CD8-positive, alpha-beta T cell (primary cell): ENCODE measurements at regions of chr22 and their contacts with region 1.

Region 1: DNA sequence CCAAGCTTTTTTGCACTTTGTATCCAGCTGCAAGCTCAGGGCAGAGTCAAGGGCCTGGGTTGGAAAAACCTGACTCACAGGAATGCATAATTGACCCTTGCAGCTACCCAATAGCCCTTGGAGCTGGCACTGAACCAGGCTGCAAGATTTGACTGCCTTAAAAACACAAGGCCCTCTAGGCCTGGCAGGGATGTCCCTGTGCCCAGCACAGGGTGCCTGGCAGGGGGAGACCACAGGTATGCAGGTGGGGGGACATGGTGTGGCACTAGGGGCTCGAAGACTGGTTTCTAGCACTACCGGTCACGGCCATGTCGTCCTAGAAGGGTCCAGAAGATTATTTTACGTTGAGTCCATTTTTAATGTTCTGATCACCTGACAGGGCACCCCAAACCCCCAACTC is 30.2 kb downstream of the SBF1 start:
- DNase-seq: peak in 1 of 9 experiments; percentile 4
- ATAC-seq: no peak
- H3K4me3 ChIP-seq: peak overlapping the region in 1 of 2 experiments; percentile 3
- H3K4me3 Mint-ChIP-seq: no peak overlapping the region
- H3K27ac ChIP-seq: peak overlapping the region; percentile 38 to 82
- H3K27ac Mint-ChIP-seq: peak overlapping the region; percentile 93
- H3K4me1 ChIP-seq: peaks cover 36% of the 10 kb centered on the region
- H3K4me1 Mint-ChIP-seq: peaks cover 29% of the 10 kb centered on the region
- H3K27me3 ChIP-seq: no peaks in the 10 kb centered on the region
- H3K27me3 Mint-ChIP-seq: no peaks in the 10 kb centered on the region
- CTCF ChIP-seq: no peak

Region 2: DNA sequence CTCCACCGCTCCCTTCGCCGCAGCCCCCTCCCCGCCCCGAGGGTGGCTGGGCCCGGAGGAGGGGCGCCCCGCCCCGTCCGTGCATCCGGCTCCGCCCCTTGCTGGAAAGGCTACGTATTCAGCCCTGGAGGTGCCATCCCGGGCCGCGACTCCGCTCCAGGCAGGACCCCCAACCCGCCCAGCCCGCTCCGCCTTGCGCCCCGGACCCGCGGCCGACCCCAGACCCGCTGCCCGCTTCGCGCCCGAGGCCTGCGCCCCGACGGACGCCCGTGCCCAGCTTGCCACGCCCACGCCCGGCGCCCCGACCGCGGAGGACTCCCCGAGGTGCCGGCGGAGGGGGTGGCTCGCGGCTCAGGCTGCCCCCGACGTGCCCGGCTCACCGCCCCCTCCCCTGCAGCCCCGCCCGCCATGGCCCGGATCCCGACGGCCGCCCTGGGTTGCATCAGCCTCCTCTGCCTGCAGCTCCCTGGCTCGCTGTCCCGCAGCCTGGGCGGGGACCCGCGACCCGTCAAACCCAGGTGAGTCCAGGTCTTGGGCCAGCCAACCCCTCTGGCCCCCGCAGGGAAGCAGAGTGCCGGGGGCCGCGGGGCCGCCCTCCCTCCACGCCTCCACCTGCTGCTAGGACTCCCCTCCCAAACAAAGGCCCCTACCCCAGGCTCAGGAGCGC is 36.9 kb after region 1 on chr22 and contains the start of gene ADM2:
- CTCF ChIA-PET with region 1: no interaction called
- POLR2A ChIA-PET with region 1: interaction called, 3 read pairs
- intact Hi-C with region 1: loop called in 1 of 2 experiments (anchors 5 kb)
- DNase-seq: peak in 8 of 9 experiments; percentile 50 to 78 (median 70)
- ATAC-seq: peak; percentile 90
- H3K4me3 ChIP-seq: peak within 1 kb of the TSS; percentile 29 to 45
- H3K4me3 Mint-ChIP-seq: peak within 1 kb of the TSS; percentile 73
- H3K27ac ChIP-seq: no peak within 1 kb of the TSS
- H3K27ac Mint-ChIP-seq: no peak within 1 kb of the TSS
- H3K4me1 ChIP-seq: peaks cover 7% of the 10 kb centered on the region
- H3K4me1 Mint-ChIP-seq: peaks cover 4% of the 10 kb centered on the region
- H3K27me3 ChIP-seq: peaks cover 0 to 6% of the 10 kb centered on the region in 2 experiments
- H3K27me3 Mint-ChIP-seq: peaks cover 4% of the 10 kb centered on the region
- CTCF ChIP-seq: no peak
- total RNA-seq, gene ADM2: 1.1 to 1.5 TPM

Region 3: GRCh38 chr22:50599786-50600455 is 155.3 kb after region 1 on chr22:
- CTCF ChIA-PET with region 1: no interaction called
- POLR2A ChIA-PET with region 1: no interaction called
- intact Hi-C with region 1: no loop called
- DNase-seq: peak; percentile 46 to 76 (median 68)
- ATAC-seq: peak; percentile 99
- H3K4me3 ChIP-seq: no peak overlapping the region
- H3K4me3 Mint-ChIP-seq: peak overlapping the region; percentile 56
- H3K27ac ChIP-seq: no peak overlapping the region
- H3K27ac Mint-ChIP-seq: no peak overlapping the region
- H3K4me1 ChIP-seq: no peaks in the 10 kb centered on the region
- H3K4me1 Mint-ChIP-seq: peaks cover 13% of the 10 kb centered on the region
- H3K27me3 ChIP-seq: peaks cover 13 to 32% of the 10 kb centered on the region in 2 experiments
- H3K27me3 Mint-ChIP-seq: peaks cover 31% of the 10 kb centered on the region
- CTCF ChIP-seq: no peak